ENCODE measurements at regions of chr6 and their contacts with region 1.

Region 1: GRCh38 chr6:159252955-159253508 is 83.8 kb downstream of the FNDC1 start:
- DNase-seq: peak in 3 of 5 donors; percentile 3 to 18 (median 7)
- H3K4me3 ChIP-seq: no peak overlapping the region
- H3K4me3 Mint-ChIP-seq: no peak overlapping the region
- H3K27ac ChIP-seq: no peak overlapping the region
- H3K27ac Mint-ChIP-seq: no peak overlapping the region
- H3K4me1 ChIP-seq: no peaks in the 10 kb centered on the region
- H3K4me1 Mint-ChIP-seq: peaks cover 0 to 5% (median 2%) of the 10 kb centered on the region in 4 donors
- H3K27me3 ChIP-seq: no peaks in the 10 kb centered on the region
- H3K27me3 Mint-ChIP-seq: peaks cover 13 to 26% of the 10 kb centered on the region in 2 donors

Region 2: GRCh38 chr6:159238920-159239558 is 14.0 kb before region 1 on chr6:
- CTCF ChIA-PET with region 1: interaction called, 40 read pairs
- POLR2A ChIA-PET with region 1: no interaction called
- intact Hi-C with region 1: no loop called
- DNase-seq: no peak
- H3K4me3 ChIP-seq: no peak overlapping the region
- H3K4me3 Mint-ChIP-seq: no peak overlapping the region
- H3K27ac ChIP-seq: no peak overlapping the region
- H3K27ac Mint-ChIP-seq: no peak overlapping the region
- H3K4me1 ChIP-seq: no peaks in the 10 kb centered on the region
- H3K4me1 Mint-ChIP-seq: peaks cover 0 to 8% (median under 1%) of the 10 kb centered on the region in 4 donors
- H3K27me3 ChIP-seq: peaks cover 10% of the 10 kb centered on the region
- H3K27me3 Mint-ChIP-seq: peaks cover 35 to 37% of the 10 kb centered on the region in 2 donors